Heart right ventricle (tissue), 16 donors: ENCODE measurements at regions of chr11 and their contacts with region 1.

Region 1: GRCh38 chr11:10134975-10135481 is 159.0 kb downstream of the SBF2 start:
- DNase-seq: no peak
- ATAC-seq: no peak
- H3K4me3 ChIP-seq: no peak overlapping the region
- H3K27ac ChIP-seq: no peak overlapping the region
- H3K4me1 ChIP-seq: peaks cover 3 to 11% (median 8%) of the 10 kb centered on the region in 9 donors
- H3K27me3 ChIP-seq: no peaks in the 10 kb centered on the region
- CTCF ChIP-seq: no peak

Region 2: DNA sequence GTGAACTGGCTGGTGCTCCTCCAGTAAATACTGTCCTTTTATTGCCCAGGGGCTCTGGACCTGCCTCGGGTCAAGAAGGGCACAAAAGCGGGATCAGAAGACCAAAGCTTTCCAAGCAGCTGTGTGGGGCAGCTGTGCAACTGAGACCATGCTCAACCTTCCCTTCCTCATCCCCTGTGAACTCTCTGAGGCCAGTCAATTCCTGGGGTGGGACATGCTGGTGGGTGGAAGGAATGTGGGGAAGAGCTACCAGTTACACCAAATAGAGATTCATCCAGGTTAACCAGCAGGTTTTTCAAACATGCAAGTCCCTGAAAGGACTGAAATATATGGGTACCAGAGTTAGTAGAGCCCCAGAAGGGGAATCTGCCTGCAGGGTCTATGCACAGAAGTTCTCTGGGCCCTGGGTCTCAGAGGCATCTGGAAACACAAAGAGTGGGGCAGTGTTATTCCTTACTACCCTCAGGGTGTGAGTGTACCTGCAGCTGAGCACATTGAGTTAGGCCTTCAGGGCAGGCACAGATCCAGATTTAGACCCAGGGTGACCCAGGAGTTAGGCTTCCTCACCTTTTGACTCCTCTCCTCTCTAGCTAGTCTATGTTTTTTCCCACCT is 515.2 kb before region 1 on chr11:
- intact Hi-C with region 1: loop called in 1 of 10 experiments (anchors 5 kb)
- DNase-seq: no peak
- ATAC-seq: no peak
- H3K4me3 ChIP-seq: no peak overlapping the region
- H3K27ac ChIP-seq: no peak overlapping the region
- H3K4me1 ChIP-seq: peaks cover 0 to 19% (median 7%) of the 10 kb centered on the region in 9 donors
- H3K27me3 ChIP-seq: no peaks in the 10 kb centered on the region
- CTCF ChIP-seq: no peak